A549 (cell line): ENCODE measurements at regions of chr5 and their contacts with region 1.

Region 1: DNA sequence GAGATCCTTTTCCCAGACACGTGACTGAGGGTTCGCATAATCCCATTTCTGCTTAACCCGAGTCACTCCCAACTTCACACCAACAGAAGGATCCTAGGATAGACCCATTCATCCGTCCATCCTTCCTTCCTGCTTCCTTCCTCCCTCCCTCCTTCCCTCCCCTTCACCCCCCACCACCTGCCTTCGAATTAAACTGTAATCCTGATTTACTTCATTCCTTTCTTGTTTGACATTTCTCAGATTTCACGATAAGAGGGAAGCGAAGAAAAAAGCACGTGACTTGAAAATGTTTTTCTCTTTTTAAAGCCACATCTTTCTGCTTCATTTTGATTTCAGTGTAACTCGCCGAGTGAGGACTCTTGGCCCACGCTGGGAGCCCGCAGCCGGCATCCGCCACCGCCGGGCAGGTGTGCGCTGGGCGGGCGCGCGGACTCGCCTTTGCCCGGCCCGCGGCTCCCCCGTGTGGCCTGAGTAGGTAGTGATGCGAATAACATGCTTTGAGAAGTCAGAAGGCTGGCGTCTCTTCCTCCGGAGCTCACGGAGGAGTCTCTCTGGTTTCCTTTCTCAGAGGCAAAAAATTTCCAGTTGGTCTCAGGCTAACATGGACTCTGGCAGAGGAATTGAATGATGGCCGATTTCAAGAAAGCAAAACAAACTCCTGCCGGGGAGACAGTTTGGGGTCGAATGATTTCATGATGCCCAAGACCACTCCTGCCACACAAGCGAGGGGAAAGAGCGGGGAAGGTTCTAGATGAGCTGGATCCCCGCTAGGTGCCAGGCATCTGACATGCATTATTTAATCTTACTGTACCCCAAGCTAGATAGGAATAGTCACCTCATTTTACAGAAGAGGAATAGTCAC is 117.7 kb downstream of the SLC12A2 start:
- DNase-seq: peak; percentile 68
- ATAC-seq: peak; percentile 83 to 94
- H3K4me3 ChIP-seq: peak overlapping the region; percentile 33
- H3K27ac ChIP-seq: peak overlapping the region; percentile 13 to 48; a peak in 3 of 6 replicates
- H3K4me1 ChIP-seq: peaks cover 24% of the 10 kb centered on the region
- CTCF ChIP-seq: peak; percentile 95
- EP300 ChIP-seq: no peak
- POLR2A ChIP-seq: no peak
- RAD21 ChIP-seq: peak; percentile 92 to 97

Region 2: GRCh38 chr5:127486471-127486870 is 714.8 kb before region 1 on chr5:
- CTCF ChIA-PET with region 1: no interaction called
- POLR2A ChIA-PET with region 1: no interaction called
- DNase-seq: no peak
- ATAC-seq: no peak
- H3K4me3 ChIP-seq: no peak overlapping the region
- H3K27ac ChIP-seq: no peak overlapping the region
- H3K4me1 ChIP-seq: no peaks in the 10 kb centered on the region
- CTCF ChIP-seq: no peak
- EP300 ChIP-seq: no peak
- POLR2A ChIP-seq: no peak
- RAD21 ChIP-seq: no peak

Region 3: GRCh38 chr5:127564002-127564769 is 637.1 kb before region 1 on chr5:
- CTCF ChIA-PET with region 1: interaction called, 25 read pairs
- POLR2A ChIA-PET with region 1: no interaction called
- DNase-seq: peak; percentile 46 to 65
- ATAC-seq: peak; percentile 85 to 93
- H3K4me3 ChIP-seq: no peak overlapping the region
- H3K27ac ChIP-seq: no peak overlapping the region
- H3K4me1 ChIP-seq: no peaks in the 10 kb centered on the region
- CTCF ChIP-seq: peak; percentile 89
- EP300 ChIP-seq: no peak
- POLR2A ChIP-seq: no peak
- RAD21 ChIP-seq: peak; percentile 84 to 89

Region 4: GRCh38 chr5:127757576-127757975 is 443.7 kb before region 1 on chr5:
- CTCF ChIA-PET with region 1: interaction called, 10 read pairs
- POLR2A ChIA-PET with region 1: no interaction called
- DNase-seq: peak; percentile 59 to 76
- ATAC-seq: peak; percentile 92 to 96
- H3K4me3 ChIP-seq: no peak overlapping the region
- H3K27ac ChIP-seq: peak overlapping the region in 1 of 2 experiments; percentile 28; a peak in 1 of 6 replicates
- H3K4me1 ChIP-seq: 0 out of 3 replicates have a peak, but pooled peaks cover 6% of the 10 kb centered on the region
- CTCF ChIP-seq: peak; percentile 90
- EP300 ChIP-seq: no peak
- POLR2A ChIP-seq: no peak
- RAD21 ChIP-seq: peak; percentile 93 to 94

Region 5: GRCh38 chr5:127875235-127876021 is 325.9 kb before region 1 on chr5:
- CTCF ChIA-PET with region 1: interaction called, 34 read pairs
- POLR2A ChIA-PET with region 1: interaction called, 3 read pairs
- DNase-seq: peak; percentile 61 to 93
- ATAC-seq: peak; percentile 94
- H3K4me3 ChIP-seq: no peak overlapping the region
- H3K27ac ChIP-seq: peak overlapping the region; percentile 56 to 75
- H3K4me1 ChIP-seq: peaks cover 46% of the 10 kb centered on the region
- CTCF ChIP-seq: peak; percentile 85
- EP300 ChIP-seq: no peak; a peak in 1 of 5 replicates
- POLR2A ChIP-seq: no peak
- RAD21 ChIP-seq: peak; percentile 93 to 94

Region 6: DNA sequence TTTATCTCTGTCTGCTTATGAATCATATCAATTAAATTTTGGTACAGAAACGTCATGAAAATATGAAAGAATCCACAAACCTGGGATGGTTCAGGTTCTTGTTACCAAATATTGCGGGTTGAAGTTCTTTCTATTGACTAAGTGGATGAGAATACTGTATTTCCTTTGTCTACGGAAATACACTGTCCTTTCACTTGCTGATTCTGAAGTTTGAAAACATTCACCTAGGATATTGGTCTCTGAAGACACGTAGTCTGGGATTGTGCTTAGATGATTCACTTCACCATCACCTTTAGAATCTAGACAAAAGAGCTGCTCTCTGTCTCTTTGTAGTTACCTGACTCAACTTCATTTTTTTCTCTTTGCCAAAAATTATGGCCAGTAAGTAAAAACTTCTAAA is 114.4 kb after region 1 on chr5:
- CTCF ChIA-PET with region 1: no interaction called
- POLR2A ChIA-PET with region 1: no interaction called
- DNase-seq: no peak
- ATAC-seq: no peak
- H3K4me3 ChIP-seq: no peak overlapping the region
- H3K27ac ChIP-seq: no peak overlapping the region
- H3K4me1 ChIP-seq: no peaks in the 10 kb centered on the region
- CTCF ChIP-seq: no peak
- EP300 ChIP-seq: no peak
- POLR2A ChIP-seq: no peak
- RAD21 ChIP-seq: no peak